GM13976 (cell line): ENCODE measurements at regions of chr7 and their contacts with region 1.

Region 1: DNA sequence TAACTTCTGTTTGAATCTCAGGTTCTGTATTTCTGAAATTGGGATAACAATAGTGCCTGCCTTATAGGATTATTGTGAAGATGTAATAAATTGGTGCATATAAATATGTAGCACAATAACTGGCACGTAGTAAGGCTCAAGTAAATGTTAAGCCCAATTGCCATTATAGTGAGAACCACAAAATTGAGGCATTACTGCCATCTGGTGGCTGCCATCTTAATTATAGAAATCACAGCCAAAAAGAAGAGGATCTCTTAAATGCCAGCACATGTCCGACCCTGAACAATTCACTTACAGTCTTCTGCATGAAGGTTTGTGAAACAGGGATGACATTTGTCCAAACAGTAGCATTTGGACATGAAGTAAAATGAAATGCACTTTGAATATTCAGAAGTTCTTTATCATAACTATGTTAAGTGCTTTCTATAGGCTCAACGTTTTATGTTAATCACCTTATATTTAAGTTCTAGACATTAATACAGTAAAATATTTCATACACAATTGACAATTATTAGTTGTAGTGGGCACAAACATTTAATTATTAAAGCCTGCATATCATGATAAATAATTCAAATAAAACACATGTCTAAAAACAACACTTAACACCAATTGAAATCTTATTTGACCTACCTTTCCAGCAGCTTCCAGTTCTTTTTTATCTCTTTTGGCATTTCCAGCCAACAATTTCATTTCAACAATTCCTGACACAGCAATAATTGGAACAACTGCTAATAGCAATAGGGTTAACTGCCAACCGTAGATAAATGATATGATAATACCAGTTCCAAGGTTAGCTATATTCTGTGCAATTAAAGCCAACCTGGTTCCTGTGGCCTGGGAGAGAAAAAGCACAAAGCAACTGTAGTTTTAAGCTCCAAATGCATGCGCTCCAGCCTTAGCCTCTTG is 58.5 kb downstream of the ABCB4 start:
- DNase-seq: peak; percentile 39
- CTCF ChIP-seq: peak; percentile 49

Region 2: GRCh38 chr7:86939197-86939814 is 477.6 kb before region 1 on chr7:
- in situ Hi-C with region 1: loop called (anchors 25 kb)
- DNase-seq: no peak
- CTCF ChIP-seq: peak; percentile 52

Region 3: DNA sequence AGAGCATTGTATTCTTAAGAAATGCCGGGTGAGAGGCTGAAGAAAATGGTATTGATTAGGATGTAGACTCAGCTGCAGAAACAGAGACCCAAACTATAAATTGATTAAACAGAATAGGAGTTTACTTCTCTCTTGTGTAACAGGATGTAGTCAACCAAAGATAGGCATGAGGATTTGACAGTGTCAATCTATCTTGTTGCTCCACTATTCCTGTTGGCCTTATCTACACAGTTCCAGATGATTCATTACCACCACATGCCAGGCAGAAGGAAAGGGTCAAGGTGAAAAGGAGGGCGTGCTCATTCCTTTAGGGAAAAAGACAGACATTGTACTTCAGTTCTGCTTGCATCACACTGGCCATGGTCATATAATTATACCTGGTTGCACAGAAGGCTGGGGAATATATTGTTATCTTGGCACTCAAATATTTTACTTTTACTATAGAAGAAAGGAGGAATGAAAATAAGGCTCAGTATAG is 276.6 kb before region 1 on chr7:
- in situ Hi-C with region 1: no loop called
- DNase-seq: no peak
- CTCF ChIP-seq: no peak

Region 4: GRCh38 chr7:87312215-87312865 is 104.6 kb before region 1 on chr7:
- in situ Hi-C with region 1: loop called (anchors 5 kb)
- DNase-seq: peak; percentile 51
- CTCF ChIP-seq: peak; percentile 92

Region 5: GRCh38 chr7:87543623-87544022 is 126.7 kb after region 1 on chr7:
- in situ Hi-C with region 1: no loop called
- DNase-seq: no peak
- CTCF ChIP-seq: no peak

Region 6: GRCh38 chr7:87747681-87748080 is 330.7 kb after region 1 on chr7:
- in situ Hi-C with region 1: no loop called
- DNase-seq: no peak
- CTCF ChIP-seq: no peak